Panc1 (cell line): ENCODE measurements at regions of chr20 and their contacts with region 1.

Region 1: GRCh38 chr20:24656391-24656790 is 187.0 kb downstream of the SYNDIG1 start:
- DNase-seq: no peak
- ATAC-seq: no peak
- H3K4me3 ChIP-seq: no peak overlapping the region
- H3K27ac ChIP-seq: no peak overlapping the region
- H3K4me1 ChIP-seq: no peaks in the 10 kb centered on the region
- H3K27me3 ChIP-seq: no peaks in the 10 kb centered on the region
- CTCF ChIP-seq: no peak

Region 2: DNA sequence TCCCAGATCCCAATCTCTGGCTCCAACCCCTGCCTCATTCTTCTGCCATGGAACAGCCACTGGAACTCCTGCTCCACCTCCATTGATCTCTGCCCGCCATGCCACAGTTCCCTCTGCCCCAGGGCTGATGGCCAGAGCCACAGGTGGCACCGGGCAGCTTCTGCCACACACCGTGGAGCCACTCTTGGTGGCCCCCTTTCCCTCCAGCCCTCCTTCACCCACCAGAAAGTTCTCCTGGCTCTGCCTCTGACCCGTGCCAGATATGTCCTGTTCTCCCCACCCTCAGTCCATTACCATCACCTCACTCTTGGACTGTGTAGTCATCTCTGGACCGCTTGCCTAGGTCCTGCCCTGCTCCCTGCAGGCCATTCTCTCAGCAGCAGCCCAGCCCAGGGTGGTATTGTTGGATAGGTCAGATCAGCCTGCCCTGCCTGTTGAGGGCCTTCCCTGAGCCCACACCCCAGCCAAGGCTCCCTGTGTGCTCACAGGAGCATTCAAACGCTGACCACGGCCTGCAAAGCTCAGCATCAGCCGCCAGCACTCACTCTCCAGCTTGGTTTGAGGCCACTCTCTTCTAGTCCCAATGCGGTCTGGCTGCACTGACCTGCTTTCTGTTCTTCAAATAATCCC is 203.8 kb before region 1 on chr20:
- CTCF ChIA-PET with region 1: no interaction called
- POLR2A ChIA-PET with region 1: no interaction called
- in situ Hi-C with region 1: no loop called
- intact Hi-C with region 1: no loop called
- DNase-seq: no peak
- ATAC-seq: no peak
- H3K4me3 ChIP-seq: no peak overlapping the region
- H3K27ac ChIP-seq: no peak overlapping the region
- H3K4me1 ChIP-seq: no peaks in the 10 kb centered on the region
- H3K27me3 ChIP-seq: peaks cover 2% of the 10 kb centered on the region
- CTCF ChIP-seq: no peak

Region 3: DNA sequence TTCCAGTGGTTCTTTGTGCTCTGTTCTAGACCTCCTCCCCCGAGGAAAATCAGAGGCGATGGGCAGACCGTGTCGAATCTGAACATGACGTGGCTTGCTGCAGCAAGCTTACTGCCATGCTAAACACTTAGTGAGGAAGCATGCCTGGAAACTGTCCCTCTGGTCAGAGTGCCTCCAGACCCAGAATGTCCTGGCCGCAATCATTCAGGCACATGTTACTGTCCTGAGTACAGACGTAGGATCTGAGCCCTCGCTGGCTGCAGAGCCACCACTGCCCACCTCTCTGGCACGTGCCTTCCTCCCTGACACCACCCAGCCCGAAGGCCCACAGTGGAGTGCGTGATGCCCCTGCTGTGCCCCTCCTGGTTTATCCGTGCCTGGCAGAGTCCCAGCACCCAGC is 23.4 kb before region 1 on chr20:
- CTCF ChIA-PET with region 1: no interaction called
- POLR2A ChIA-PET with region 1: interaction called, 22 read pairs
- in situ Hi-C with region 1: no loop called
- intact Hi-C with region 1: no loop called
- DNase-seq: no peak
- ATAC-seq: no peak
- H3K4me3 ChIP-seq: no peak overlapping the region
- H3K27ac ChIP-seq: no peak overlapping the region
- H3K4me1 ChIP-seq: peaks cover 8% of the 10 kb centered on the region
- H3K27me3 ChIP-seq: no peaks in the 10 kb centered on the region
- CTCF ChIP-seq: no peak

Region 4: GRCh38 chr20:25032478-25033280 is 376.3 kb after region 1 on chr20:
- CTCF ChIA-PET with region 1: no interaction called
- POLR2A ChIA-PET with region 1: no interaction called
- in situ Hi-C with region 1: no loop called
- intact Hi-C with region 1: no loop called
- DNase-seq: no peak
- ATAC-seq: peak; percentile 71
- H3K4me3 ChIP-seq: no peak overlapping the region
- H3K27ac ChIP-seq: peak overlapping the region; percentile 46; the same call in 1 of the 2 replicates
- H3K4me1 ChIP-seq: peaks cover 16% of the 10 kb centered on the region
- H3K27me3 ChIP-seq: no peaks in the 10 kb centered on the region
- CTCF ChIP-seq: no peak